Sigmoid colon (tissue), 7 donors: ENCODE measurements at regions of chr1 and their contacts with region 1.

Region 1: DNA sequence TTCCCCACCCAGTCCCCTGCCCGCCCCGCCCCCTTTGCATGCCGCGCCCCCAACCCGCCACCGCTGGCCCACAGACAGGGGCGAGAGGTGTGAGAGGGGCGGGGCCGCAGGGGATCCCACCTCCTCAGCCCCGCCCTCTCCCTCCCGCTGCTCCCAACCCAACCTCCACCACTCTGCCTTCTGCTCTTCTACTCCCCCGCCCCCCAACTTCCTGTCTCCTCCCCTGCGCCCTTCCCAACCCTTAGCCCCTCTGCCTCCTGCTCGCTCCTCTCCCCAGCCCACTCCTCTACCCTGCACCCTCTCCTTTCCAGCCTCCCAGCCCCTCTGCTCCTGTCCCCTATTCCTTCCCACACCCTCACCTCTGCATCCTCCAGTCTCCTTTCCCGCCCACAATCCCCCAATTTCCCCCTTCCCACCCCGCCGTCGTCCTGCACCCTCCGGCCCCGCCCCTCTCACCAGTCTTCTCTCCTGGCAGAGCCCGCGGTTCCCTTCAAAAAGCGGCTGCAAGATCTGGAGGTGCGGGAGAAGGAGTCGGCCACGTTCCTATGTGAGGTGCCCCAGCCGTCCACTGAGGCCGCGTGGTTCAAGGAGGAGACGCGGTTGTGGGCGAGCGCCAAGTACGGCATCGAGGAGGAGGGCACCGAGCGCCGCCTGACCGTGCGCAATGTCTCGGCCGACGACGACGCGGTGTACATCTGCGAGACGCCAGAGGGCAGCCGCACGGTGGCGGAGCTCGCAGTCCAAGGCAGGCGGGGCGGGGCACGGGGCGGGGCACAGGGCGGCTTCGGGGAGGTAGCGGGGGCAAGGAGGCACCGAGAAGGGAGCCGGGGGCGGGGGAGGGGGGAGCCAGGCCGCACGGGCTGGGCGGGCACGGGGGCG is 5.4 kb downstream of the OBSCN start:
- DNase-seq: peak; percentile 90
- H3K4me3 ChIP-seq: peak overlapping the region; percentile 31 to 52 (median 42)
- H3K27ac ChIP-seq: peak overlapping the region in 1 of 4 donors; percentile 15
- H3K4me1 ChIP-seq: peaks cover 0 to 22% (median 19%) of the 10 kb centered on the region in 4 donors
- H3K27me3 ChIP-seq: peaks cover 12 to 36% (median 24%) of the 10 kb centered on the region in 3 donors
- CTCF ChIP-seq: peak in 3 of 4 experiments; percentile 20 to 62 (median 32)
- EP300 ChIP-seq: no peak
- POLR2A ChIP-seq: no peak

Region 2: GRCh38 chr1:228165372-228166169 is 47.6 kb before region 1 on chr1 and contains the start of gene IBA57:
- intact Hi-C with region 1: no loop called
- DNase-seq: peak; percentile 100
- H3K4me3 ChIP-seq: peak within 1 kb of the TSS; percentile 69 to 83 (median 78)
- H3K27ac ChIP-seq: peak within 1 kb of the TSS; percentile 94 to 100 (median 98)
- H3K4me1 ChIP-seq: peaks cover 0 to 30% (median 24%) of the 10 kb centered on the region in 4 donors
- H3K27me3 ChIP-seq: peaks cover 3 to 23% (median 10%) of the 10 kb centered on the region in 3 donors
- CTCF ChIP-seq: peak; percentile 64 to 92 (median 80)
- EP300 ChIP-seq: peak in 2 of 4 donors; percentile 84 to 99
- POLR2A ChIP-seq: no peak
- total RNA-seq, gene IBA57: 2.9 to 14.0 (median 7.3) TPM

Region 3: GRCh38 chr1:228275739-228276421 is 62.7 kb after region 1 on chr1:
- intact Hi-C with region 1: loop called (anchors 1 kb)
- DNase-seq: peak; percentile 96
- H3K4me3 ChIP-seq: peak overlapping the region; percentile 51 to 72 (median 59)
- H3K27ac ChIP-seq: peak overlapping the region; percentile 74 to 80 (median 78)
- H3K4me1 ChIP-seq: peaks cover 0 to 26% (median 19%) of the 10 kb centered on the region in 4 donors
- H3K27me3 ChIP-seq: no peaks in the 10 kb centered on the region
- CTCF ChIP-seq: no peak
- EP300 ChIP-seq: no peak
- POLR2A ChIP-seq: no peak

Region 4: DNA sequence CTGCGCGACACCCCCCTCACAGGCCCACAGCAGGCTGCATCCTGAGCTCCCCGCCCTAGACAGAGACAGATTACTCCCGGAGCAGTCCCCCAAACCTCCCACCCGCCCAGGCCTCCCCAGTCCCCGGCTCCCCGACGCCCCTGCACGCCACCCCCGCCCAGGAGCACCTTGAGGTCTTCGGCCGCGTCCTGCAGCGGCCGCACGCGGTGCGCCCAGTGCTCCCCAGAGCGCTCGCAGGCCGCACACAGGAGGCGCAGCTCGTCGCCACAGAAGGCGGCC is 192.7 kb after region 1 on chr1:
- intact Hi-C with region 1: loop called (anchors 5 kb)
- DNase-seq: no peak
- H3K4me3 ChIP-seq: peak overlapping the region; percentile 75 to 99 (median 83)
- H3K27ac ChIP-seq: peak overlapping the region; percentile 81 to 87 (median 86)
- H3K4me1 ChIP-seq: peaks cover 0 to 47% (median 42%) of the 10 kb centered on the region in 4 donors
- H3K27me3 ChIP-seq: no peaks in the 10 kb centered on the region
- CTCF ChIP-seq: no peak
- EP300 ChIP-seq: no peak
- POLR2A ChIP-seq: no peak